AG04450 (cell line): ENCODE measurements at regions of chr12 and their contacts with region 1.

Region 1: DNA sequence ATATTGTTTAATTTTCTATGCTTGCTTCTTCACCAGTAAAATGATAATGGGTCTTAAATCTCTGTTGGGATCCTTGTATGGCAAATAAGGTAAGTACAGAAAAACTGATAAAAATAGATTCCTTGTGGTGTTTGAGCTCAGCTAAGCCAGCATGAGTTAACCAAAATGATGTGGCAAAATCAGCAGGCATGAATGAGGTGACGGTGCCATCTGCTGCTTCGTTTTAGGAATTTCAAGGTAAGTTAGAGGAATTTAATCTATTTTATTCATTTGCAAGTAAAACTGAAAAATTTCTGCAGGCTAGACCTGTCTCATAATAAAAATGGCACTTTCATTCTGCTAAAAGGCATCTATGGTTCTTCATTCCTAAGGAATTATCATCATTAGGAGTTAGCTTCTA is 10.0 kb upstream of the CLEC7A start:
- DNase-seq: no peak
- H3K4me3 ChIP-seq: no peak overlapping the region
- H3K27ac ChIP-seq: no peak overlapping the region
- H3K27me3 ChIP-seq: no peaks in the 10 kb centered on the region
- CTCF ChIP-seq: peak; percentile 51

Region 2: DNA sequence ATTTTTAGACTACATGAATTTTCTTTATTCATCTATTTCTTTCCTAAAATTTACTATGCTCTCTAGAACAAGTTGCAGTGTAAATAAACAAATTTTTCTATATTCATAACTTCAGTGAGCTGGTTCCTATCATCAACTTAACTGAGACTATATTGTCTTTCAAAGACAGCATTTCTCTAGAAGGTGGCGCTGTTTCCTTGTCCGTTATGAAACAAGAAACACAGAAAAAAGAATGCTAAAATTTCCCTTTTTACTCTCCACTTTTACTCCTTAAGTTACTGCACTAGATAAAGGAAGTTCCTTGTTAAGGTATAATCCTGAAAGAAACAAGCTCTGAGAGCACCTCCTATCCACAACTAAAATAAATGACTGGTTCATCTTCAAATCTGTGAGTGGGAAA is 199.6 kb before region 1 on chr12:
- CTCF ChIA-PET with region 1: interaction called, 17 read pairs
- POLR2A ChIA-PET with region 1: no interaction called
- DNase-seq: no peak
- H3K4me3 ChIP-seq: no peak overlapping the region
- H3K27ac ChIP-seq: no peak overlapping the region
- H3K27me3 ChIP-seq: peaks cover 5% of the 10 kb centered on the region
- CTCF ChIP-seq: peak; percentile 50

Region 3: DNA sequence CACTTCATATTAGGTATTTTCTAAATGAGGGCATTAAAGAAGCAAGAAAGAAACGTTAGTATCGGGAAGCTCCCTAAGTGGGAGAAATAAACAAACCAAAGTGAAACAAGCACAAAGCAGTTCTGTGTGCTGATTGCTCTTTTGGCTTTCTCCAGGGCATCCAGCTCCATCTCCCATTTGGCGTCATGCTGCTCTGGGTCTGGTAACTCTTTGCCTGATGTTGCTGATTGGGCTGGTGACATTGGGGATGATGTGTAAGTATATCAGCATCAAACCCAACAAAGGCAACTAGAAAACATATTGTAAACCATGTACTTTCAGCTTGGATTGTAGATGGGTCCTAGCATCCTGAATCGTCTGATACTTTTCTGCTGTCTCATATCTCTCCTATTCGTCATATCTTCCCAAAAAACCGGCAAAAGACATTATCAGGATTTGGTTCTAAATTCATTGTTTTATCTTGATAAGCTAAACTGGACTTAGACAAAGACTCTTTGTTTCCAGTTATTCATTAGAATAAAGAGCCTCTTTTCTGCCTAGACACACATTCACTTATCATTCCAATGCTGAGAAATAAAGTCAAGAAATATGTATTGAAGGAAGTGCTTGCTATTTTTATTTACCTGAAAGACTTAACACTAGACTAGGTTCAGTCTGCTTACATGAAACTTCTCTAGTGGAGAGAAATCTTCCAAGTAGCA is 127.2 kb before region 1 on chr12:
- CTCF ChIA-PET with region 1: interaction called, 122 read pairs
- POLR2A ChIA-PET with region 1: no interaction called
- DNase-seq: no peak
- H3K4me3 ChIP-seq: no peak overlapping the region
- H3K27ac ChIP-seq: no peak overlapping the region
- H3K27me3 ChIP-seq: no peaks in the 10 kb centered on the region
- CTCF ChIP-seq: no peak

Region 4: DNA sequence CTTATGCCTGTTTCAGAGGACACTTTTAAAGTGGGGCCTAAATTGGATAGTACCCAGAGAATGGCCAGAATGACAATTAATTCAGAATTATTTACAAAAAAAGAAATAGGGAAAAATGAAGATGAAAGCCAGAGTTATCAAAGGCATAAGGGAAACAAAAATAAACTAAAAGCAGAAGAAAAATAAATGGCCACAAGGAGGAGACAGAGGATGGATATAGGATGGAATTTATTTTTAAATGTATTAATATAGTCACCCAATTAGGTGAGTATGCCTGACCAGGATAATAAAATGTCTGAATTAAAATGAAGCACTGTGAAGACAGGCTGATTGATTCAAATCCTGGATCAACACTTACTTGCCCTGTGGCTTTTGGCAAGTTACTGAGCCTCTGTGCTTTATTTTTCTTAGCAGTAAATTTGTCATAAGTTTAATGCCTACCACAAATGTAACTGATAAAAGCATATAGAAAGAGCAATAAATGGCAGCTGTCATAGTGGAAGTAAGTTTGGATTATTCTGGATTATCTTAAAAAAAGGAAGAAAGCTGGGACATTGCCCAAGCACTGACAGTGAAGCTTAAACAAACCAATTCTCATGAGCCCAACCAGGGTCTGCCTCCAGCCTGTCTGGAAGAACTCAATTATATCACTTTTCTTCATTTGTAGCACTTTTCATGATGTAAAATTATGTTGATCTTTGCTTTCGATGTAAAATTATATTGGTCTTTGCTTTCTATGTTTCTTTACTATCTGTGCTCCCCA is 106.0 kb before region 1 on chr12:
- CTCF ChIA-PET with region 1: interaction called, 39 read pairs
- POLR2A ChIA-PET with region 1: no interaction called
- DNase-seq: no peak
- H3K4me3 ChIP-seq: no peak overlapping the region
- H3K27ac ChIP-seq: no peak overlapping the region
- H3K27me3 ChIP-seq: no peaks in the 10 kb centered on the region
- CTCF ChIP-seq: peak; percentile 55